Heart left ventricle (tissue), 16 donors: ENCODE measurements at regions of chr16 and their contacts with region 1.

Region 1: DNA sequence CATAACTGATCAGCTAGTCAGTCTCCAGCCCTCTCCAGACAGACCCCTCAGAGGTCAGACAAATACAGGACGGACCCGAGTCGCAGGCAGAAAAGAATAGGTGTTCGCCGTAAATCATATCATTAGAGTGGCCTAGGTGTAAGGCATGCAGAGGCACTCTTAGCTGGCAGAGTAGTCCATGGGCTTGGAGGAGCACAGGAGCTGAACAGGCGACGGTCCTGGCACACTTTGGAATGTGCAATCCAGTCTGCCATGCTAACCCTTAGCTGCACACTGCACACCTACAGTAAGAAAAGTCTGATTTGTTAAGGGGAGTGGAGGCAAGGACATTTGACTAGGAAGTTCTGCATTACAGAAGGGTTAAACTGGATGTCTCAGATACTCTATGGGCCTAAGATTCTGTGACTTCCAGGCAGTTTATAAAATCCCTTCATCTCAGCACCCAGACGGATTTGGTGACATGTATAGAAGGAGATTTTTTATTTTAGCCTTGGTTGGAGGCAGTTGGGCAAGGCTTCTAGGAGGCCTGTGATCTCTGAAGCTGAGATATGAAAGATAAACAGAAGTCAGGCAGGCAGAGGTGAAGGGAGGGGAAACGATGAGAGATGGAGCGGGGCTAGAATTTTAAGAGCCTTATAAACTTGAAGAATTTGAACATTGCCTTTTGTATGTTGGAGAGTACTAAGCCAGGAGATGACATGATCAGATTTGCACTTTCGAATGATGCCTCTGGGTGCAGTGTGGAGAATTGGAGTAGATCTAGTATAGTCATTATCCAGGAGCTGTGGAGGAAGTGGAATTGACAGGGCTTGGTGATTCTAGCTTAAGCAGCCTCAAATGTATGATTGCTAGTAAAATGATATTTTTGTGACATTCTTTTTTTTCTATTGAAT is 34.6 kb upstream of the SLC5A11 start:
- DNase-seq: no peak
- ATAC-seq: peak; percentile 9 to 41 (median 18)
- H3K4me3 ChIP-seq: no peak overlapping the region
- H3K27ac ChIP-seq: no peak overlapping the region
- H3K4me1 ChIP-seq: peaks cover 0 to 12% (median 0%) of the 10 kb centered on the region in 12 donors
- H3K27me3 ChIP-seq: no peaks in the 10 kb centered on the region
- CTCF ChIP-seq: no peak
- POLR2A ChIP-seq: no peak

Region 2: GRCh38 chr16:24789881-24790280 is 21.3 kb before region 1 on chr16:
- intact Hi-C with region 1: no loop called
- DNase-seq: no peak
- ATAC-seq: no peak
- H3K4me3 ChIP-seq: no peak overlapping the region
- H3K27ac ChIP-seq: no peak overlapping the region
- H3K4me1 ChIP-seq: peaks cover 0 to 15% (median 8%) of the 10 kb centered on the region in 12 donors
- H3K27me3 ChIP-seq: no peaks in the 10 kb centered on the region
- CTCF ChIP-seq: no peak
- POLR2A ChIP-seq: no peak

Region 3: DNA sequence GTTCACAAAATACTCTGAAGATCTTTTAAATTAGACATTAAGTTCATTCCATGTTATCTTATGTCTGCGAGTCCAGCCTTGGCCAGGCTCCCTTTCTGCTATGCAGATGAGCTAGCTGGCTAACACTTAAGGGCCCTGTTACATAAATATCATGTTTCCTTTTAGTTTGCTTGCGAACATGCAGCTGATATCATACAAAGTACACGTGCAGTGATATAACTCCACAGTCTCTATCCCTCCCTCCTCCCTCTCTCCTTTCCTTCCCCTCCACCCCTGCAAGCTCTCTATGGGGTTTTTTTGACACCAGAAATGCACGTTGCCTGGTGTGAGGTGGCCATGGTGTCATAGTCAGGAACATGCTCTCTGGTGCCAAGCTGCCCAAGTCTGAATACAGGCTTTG is 157.9 kb after region 1 on chr16:
- intact Hi-C with region 1: loop called in 1 of 10 experiments (anchors 10 kb)
- DNase-seq: no peak
- ATAC-seq: peak; percentile 22 to 63 (median 47)
- H3K4me3 ChIP-seq: no peak overlapping the region
- H3K27ac ChIP-seq: peak overlapping the region in 7 of 12 donors; percentile 19 to 65 (median 32)
- H3K4me1 ChIP-seq: peaks cover 0 to 51% (median 20%) of the 10 kb centered on the region in 12 donors
- H3K27me3 ChIP-seq: no peaks in the 10 kb centered on the region
- CTCF ChIP-seq: no peak
- POLR2A ChIP-seq: no peak